ENCODE measurements at regions of chr12 and their contacts with region 1.

Region 1: DNA sequence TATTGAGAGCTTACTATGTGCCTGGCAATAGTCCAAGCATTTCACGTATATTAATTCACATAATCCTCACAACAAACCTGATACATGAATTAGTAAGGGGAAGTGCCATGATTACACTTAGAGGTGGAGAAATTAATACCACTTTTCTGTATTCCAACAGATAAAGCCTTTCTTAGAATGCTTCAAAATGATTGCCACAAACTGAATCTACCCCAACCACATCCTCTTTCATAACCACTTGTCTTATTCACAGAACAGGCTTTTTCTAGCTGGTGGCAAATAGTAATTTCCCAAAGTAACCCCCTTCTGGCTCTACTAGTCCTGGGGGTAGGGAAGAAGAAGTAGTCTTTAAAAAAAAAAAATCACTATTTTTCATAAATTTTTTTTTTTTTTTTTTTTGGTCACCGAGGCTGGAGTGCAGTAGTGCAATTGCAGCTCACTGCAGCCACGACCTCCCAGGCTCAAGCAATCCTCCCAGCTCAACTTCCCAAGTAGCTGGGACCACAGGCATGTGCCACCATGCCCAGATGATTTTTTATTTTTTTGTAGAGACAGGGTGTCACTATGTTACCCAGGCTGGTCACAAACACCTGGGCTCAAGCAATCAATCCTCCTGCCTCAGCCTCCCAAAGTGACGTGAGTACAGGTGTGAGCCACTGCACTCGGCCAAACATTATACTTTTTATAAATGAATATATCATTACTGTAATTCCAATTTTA is 59.0 kb upstream of the ARID2 start:
- DNase-seq: no peak
- ATAC-seq: no peak
- H3K4me3 ChIP-seq: no peak overlapping the region
- H3K27ac ChIP-seq: peak overlapping the region; percentile 48 to 59 (median 50)
- H3K4me1 ChIP-seq: peaks cover 24 to 29% of the 10 kb centered on the region in 2 donors
- H3K27me3 ChIP-seq: no peaks in the 10 kb centered on the region
- CTCF ChIP-seq: no peak
- POLR2A ChIP-seq: no peak

Region 2: DNA sequence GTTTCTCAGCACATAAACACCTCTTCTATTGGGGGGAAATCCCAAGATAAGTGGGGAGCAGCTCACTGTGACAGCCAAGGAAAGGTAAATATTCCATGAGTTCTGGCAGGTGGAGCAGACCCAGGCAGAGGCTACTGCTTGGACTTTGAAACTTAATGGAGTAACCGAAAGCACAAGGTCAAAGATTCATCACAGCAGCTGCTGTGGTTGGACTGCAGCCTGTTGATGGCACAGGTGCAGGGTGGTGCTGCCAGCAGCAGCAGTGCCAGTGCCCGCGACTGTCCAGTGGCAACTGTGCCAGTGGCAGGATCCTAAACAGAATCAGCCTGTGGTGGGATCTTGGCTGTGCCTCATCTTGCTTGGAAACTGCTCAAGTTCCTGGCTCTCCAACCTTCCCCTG is 22.4 kb before region 1 on chr12:
- in situ Hi-C with region 1: no loop called
- intact Hi-C with region 1: loop called (anchors 2 kb)
- DNase-seq: peak; percentile 64 to 84
- ATAC-seq: peak; percentile 100
- H3K4me3 ChIP-seq: no peak overlapping the region
- H3K27ac ChIP-seq: peak overlapping the region; percentile 7 to 44 (median 32)
- H3K4me1 ChIP-seq: peaks cover 9 to 18% of the 10 kb centered on the region in 2 donors
- H3K27me3 ChIP-seq: no peaks in the 10 kb centered on the region
- CTCF ChIP-seq: no peak
- POLR2A ChIP-seq: no peak

Region 3: DNA sequence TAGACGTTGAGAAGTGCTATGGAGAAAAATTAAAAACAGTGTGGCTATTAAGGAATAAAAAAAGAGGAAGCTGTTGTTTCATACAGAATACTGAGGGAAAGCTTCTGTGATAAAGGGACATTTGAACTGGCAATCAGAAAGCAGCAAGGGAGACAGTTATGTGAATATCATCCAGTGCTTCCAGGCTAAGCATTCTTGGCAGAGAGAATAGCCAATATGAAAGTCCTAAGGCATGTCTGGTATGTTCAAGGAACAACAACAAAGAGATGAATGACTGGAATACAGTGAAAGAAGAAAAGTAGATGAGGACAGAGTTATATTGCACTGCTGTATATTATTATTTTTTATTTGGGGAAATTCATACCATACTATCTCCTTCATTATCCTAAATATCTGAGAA is 296.0 kb after region 1 on chr12:
- in situ Hi-C with region 1: no loop called
- intact Hi-C with region 1: no loop called
- DNase-seq: no peak
- ATAC-seq: peak in 1 of 2 donors; percentile 42
- H3K4me3 ChIP-seq: no peak overlapping the region
- H3K27ac ChIP-seq: no peak overlapping the region
- H3K4me1 ChIP-seq: peaks cover 53 to 62% of the 10 kb centered on the region in 2 donors
- H3K27me3 ChIP-seq: no peaks in the 10 kb centered on the region
- CTCF ChIP-seq: no peak
- POLR2A ChIP-seq: no peak